CD14-positive monocyte (primary cell): ENCODE measurements at regions of chr7 and their contacts with region 1.

Region 1: GRCh38 chr7:101953248-101953819 is 135.9 kb downstream of the CUX1 start:
- DNase-seq: peak; percentile 34 to 83 (median 60)
- H3K4me3 ChIP-seq: no peak overlapping the region
- H3K4me3 Mint-ChIP-seq: peak overlapping the region in 1 of 2 donors; percentile 13
- H3K27ac ChIP-seq: peak overlapping the region in 1 of 2 donors; percentile 75
- H3K27ac Mint-ChIP-seq: peak overlapping the region; percentile 70 to 88 (median 79)
- H3K4me1 ChIP-seq: peaks cover 20 to 32% of the 10 kb centered on the region in 2 donors
- H3K4me1 Mint-ChIP-seq: peaks cover 28% of the 10 kb centered on the region
- H3K27me3 ChIP-seq: no peaks in the 10 kb centered on the region
- H3K27me3 Mint-ChIP-seq: no peaks in the 10 kb centered on the region
- CTCF ChIP-seq: no peak

Region 2: DNA sequence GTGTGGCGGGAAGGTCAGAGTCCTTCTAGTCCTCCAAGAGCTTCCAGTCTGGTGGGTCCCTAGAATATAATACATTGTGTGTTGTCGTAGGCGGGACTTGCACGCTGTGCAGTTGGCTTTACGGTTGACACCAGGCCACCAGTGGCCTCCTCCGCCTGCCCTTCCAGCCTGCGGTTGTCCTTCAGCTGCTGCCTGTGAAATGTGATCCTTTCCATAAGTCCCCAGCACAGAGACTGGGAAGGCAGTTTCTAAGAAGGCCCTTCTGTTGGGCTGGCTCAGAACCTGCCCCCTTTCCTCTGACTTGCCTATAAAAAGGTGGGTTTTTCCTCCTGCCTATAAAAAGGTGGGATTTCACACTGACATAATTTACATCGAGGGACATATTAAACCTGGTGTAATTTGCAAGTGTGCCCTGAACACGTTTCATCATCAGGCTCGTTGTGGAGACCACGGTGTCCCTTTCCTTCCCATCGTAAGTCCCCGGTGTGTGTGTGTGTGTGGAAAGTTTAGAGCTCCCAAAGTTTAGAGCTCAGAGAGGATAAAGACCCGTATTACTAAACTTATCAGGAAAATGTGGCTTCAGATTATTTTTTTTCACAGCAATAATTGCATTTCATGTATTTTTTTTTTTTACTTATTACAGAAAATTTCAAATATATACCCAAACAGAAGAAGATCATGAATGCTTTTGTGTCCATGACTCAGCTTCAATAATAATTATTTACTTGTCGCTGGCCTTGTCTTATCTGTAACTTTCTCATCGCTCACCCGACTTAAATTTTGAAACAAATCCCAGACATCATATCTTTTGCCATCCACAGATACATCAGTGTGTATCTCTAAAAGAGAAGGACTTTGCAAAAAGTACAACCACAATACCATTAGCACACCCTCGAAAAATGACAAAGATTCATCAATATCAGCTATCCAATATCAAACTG is 90.8 kb before region 1 on chr7:
- intact Hi-C with region 1: loop called in 1 of 2 experiments (anchors 10 kb)
- DNase-seq: no peak
- H3K4me3 ChIP-seq: no peak overlapping the region
- H3K4me3 Mint-ChIP-seq: no peak overlapping the region
- H3K27ac ChIP-seq: peak overlapping the region in 1 of 2 donors; percentile 14
- H3K27ac Mint-ChIP-seq: peak overlapping the region in 4 of 7 donors; percentile 42 to 71 (median 60)
- H3K4me1 ChIP-seq: peaks cover 27 to 30% of the 10 kb centered on the region in 2 donors
- H3K4me1 Mint-ChIP-seq: peaks cover 38% of the 10 kb centered on the region
- H3K27me3 ChIP-seq: no peaks in the 10 kb centered on the region
- H3K27me3 Mint-ChIP-seq: no peaks in the 10 kb centered on the region
- CTCF ChIP-seq: no peak

Region 3: GRCh38 chr7:102260856-102261255 is 307.5 kb after region 1 on chr7:
- intact Hi-C with region 1: no loop called
- DNase-seq: no peak
- H3K4me3 ChIP-seq: no peak overlapping the region
- H3K4me3 Mint-ChIP-seq: no peak overlapping the region
- H3K27ac ChIP-seq: no peak overlapping the region
- H3K27ac Mint-ChIP-seq: peak overlapping the region in 2 of 7 donors; percentile 43 to 80
- H3K4me1 ChIP-seq: no peaks in the 10 kb centered on the region
- H3K4me1 Mint-ChIP-seq: no peaks in the 10 kb centered on the region
- H3K27me3 ChIP-seq: no peaks in the 10 kb centered on the region
- H3K27me3 Mint-ChIP-seq: peaks cover 0 to 3% (median 0%) of the 10 kb centered on the region in 3 donors
- CTCF ChIP-seq: no peak